Transverse colon (tissue), 4 donors: ENCODE measurements at regions of chr13 and their contacts with region 1.

Region 1: DNA sequence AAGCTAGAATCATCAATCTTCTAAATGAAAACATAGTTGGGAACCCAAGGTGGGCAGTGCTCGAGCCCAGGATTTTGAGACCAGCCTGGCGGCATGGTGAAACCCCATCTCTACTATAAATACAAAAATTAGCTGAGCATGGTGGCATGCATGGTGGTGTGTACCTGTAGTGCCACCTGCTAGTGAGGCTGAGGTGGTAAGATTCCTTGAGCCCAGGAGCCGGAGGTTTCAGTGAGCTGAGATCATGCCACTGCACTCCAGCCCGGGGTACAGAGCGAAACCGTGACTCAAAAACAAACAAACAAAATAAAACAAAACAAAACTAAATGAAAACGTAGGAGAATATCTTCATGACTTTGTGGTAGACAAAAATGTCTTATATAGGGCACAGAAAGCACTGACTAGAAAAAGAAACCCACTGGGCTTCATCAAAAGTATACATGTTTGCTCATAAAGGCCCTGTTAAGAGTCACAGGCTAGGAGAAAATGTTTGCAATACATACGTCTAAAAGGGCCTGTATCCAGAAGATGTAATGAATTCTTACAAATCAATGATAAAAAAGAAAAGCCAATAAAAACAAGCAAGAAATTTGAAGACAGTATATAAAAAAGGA is 353.6 kb downstream of the FGF9 start:
- DNase-seq: no peak
- H3K4me3 ChIP-seq: no peak overlapping the region
- H3K27ac ChIP-seq: no peak overlapping the region
- H3K4me1 ChIP-seq: no peaks in the 10 kb centered on the region
- H3K27me3 ChIP-seq: no peaks in the 10 kb centered on the region
- CTCF ChIP-seq: no peak
- EP300 ChIP-seq: no peak
- POLR2A ChIP-seq: no peak

Region 2: GRCh38 chr13:21458813-21459701 is 565.4 kb before region 1 on chr13 and contains the start of gene ZDHHC20:
- in situ Hi-C with region 1: no loop called
- intact Hi-C with region 1: no loop called
- DNase-seq: peak; percentile 94
- H3K4me3 ChIP-seq: peak within 1 kb of the TSS; percentile 65 to 100 (median 97)
- H3K27ac ChIP-seq: peak within 1 kb of the TSS; percentile 92 to 99 (median 98)
- H3K4me1 ChIP-seq: peaks cover 8 to 17% (median 11%) of the 10 kb centered on the region in 4 donors
- H3K27me3 ChIP-seq: no peaks in the 10 kb centered on the region
- CTCF ChIP-seq: peak in 1 of 5 experiments; percentile 3
- EP300 ChIP-seq: no peak
- POLR2A ChIP-seq: peak; percentile 88
- total RNA-seq, gene ZDHHC20: 29.9 to 104 (median 76.9) TPM

Region 3: GRCh38 chr13:23667750-23668149 is 1643.3 kb after region 1 on chr13:
- in situ Hi-C with region 1: no loop called
- intact Hi-C with region 1: loop called (anchors 10 kb)
- DNase-seq: no peak
- H3K4me3 ChIP-seq: no peak overlapping the region
- H3K27ac ChIP-seq: no peak overlapping the region
- H3K4me1 ChIP-seq: no peaks in the 10 kb centered on the region
- H3K27me3 ChIP-seq: no peaks in the 10 kb centered on the region
- CTCF ChIP-seq: no peak
- EP300 ChIP-seq: no peak
- POLR2A ChIP-seq: no peak